ENCODE measurements at regions of chr12 and their contacts with region 1.

Region 1: GRCh38 chr12:113473942-113474341 is 2.3 kb upstream of the LHX5 start:
- DNase-seq: no peak
- H3K4me3 Mint-ChIP-seq: no peak overlapping the region
- H3K27ac Mint-ChIP-seq: no peak overlapping the region
- H3K4me1 Mint-ChIP-seq: peaks cover 6% of the 10 kb centered on the region
- H3K27me3 Mint-ChIP-seq: peaks cover 93% of the 10 kb centered on the region
- CTCF ChIP-seq: no peak

Region 2: DNA sequence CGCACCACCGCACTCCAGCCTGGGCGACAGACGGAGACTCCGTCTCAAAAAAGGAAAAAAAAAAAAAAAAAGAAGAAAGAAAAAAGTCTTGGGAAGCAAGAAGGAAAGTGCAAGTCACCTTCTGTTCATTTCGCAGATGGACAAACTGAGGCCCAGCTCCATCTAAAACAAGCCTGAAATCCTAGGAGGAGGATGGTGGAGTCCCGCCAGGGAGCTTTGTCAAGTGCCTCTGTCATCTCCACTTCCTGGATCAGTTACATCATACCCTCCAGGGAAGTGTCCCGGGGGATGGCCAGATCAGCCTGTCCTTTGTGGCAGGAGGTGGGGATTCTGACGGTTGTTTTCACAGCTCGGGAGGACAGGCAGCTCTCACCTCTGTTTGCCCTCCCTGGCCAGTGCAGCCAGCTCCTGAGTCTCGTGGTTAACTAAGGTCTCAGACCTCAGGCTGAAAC is 60.4 kb before region 1 on chr12:
- CTCF ChIA-PET with region 1: no interaction called
- POLR2A ChIA-PET with region 1: no interaction called
- intact Hi-C with region 1: no loop called
- DNase-seq: peak; percentile 46
- H3K4me3 Mint-ChIP-seq: no peak overlapping the region
- H3K27ac Mint-ChIP-seq: no peak overlapping the region
- H3K4me1 Mint-ChIP-seq: no peaks in the 10 kb centered on the region
- H3K27me3 Mint-ChIP-seq: no peaks in the 10 kb centered on the region
- CTCF ChIP-seq: no peak

Region 3: DNA sequence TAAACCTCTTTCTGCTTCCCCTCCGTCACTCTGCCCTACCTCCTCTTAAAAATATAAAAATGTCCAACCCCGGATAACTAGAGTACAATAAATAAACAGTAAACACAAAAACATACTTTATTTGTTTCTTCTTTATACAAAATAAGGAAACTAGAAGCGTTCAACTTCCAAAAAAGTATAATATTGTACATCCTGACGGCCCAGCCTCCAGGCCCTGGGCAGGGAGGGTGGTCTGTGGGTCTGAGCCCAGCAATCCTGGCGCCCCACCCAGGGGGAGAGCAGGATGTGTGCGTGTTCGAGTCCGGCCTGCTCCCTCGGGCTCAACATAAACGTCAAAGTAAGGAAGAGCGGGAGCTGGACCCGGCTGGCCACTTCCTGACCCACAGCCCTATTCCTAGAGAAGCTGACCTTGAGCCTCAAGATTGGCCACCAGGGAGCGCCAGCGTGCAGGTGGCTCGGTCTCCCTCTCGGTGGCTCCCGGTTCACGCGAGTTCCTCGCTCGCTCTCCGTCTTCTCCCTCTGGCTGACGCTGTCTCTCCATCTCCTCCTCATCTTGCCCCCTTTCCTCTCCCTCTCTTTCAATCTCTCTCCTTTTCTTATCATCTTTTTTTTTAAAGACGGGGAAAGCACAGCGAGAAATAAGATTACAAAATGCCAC is 11.7 kb before region 1 on chr12:
- CTCF ChIA-PET with region 1: interaction called, 12 read pairs
- POLR2A ChIA-PET with region 1: no interaction called
- intact Hi-C with region 1: no loop called
- DNase-seq: peak; percentile 71
- H3K4me3 Mint-ChIP-seq: peak overlapping the region; percentile 67
- H3K27ac Mint-ChIP-seq: no peak overlapping the region
- H3K4me1 Mint-ChIP-seq: peaks cover 6% of the 10 kb centered on the region
- H3K27me3 Mint-ChIP-seq: peaks cover 83% of the 10 kb centered on the region
- CTCF ChIP-seq: peak; percentile 94